Esophagus squamous epithelium (tissue), 5 donors: ENCODE measurements at regions of chr10 and their contacts with region 1.

Region 1: GRCh38 chr10:122699706-122700436 is at the start of gene C10orf120:
- DNase-seq: no peak
- H3K4me3 ChIP-seq: no peak within 1 kb of the TSS
- H3K27ac ChIP-seq: no peak within 1 kb of the TSS
- H3K4me1 ChIP-seq: no peaks in the 10 kb centered on the region
- H3K27me3 ChIP-seq: peaks cover 0 to 13% (median 0%) of the 10 kb centered on the region in 4 donors
- CTCF ChIP-seq: no peak
- POLR2A ChIP-seq: no peak
- total RNA-seq, gene C10orf120: not detected

Region 2: GRCh38 chr10:122279725-122280141 is 420.1 kb before region 1 on chr10:
- intact Hi-C with region 1: loop called (anchors 10 kb)
- DNase-seq: no peak
- H3K4me3 ChIP-seq: no peak overlapping the region
- H3K27ac ChIP-seq: no peak overlapping the region
- H3K4me1 ChIP-seq: no peaks in the 10 kb centered on the region
- H3K27me3 ChIP-seq: no peaks in the 10 kb centered on the region
- CTCF ChIP-seq: peak in 5 of 6 experiments; percentile 30 to 74 (median 56)
- POLR2A ChIP-seq: no peak

Region 3: DNA sequence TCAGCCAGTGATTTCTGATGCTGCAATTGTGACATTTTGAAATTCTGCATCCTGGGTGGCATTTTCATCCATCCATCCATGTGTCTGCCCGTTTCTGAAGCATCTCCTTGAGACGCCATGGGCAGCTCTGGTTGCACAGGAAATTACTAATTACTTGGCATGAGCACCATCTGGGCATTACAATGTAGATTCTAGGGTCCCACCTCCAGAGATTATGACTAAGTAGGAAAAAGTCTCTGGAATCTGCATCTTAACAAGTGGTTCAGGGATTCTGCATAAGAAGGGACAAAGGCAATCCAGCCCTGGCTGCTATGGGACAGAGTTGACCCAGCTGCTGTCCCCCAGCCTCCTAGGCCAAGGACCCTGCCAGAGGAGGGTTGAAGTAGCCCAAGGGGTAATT is 80.5 kb after region 1 on chr10:
- intact Hi-C with region 1: no loop called
- DNase-seq: no peak
- H3K4me3 ChIP-seq: no peak overlapping the region
- H3K27ac ChIP-seq: no peak overlapping the region
- H3K4me1 ChIP-seq: no peaks in the 10 kb centered on the region
- H3K27me3 ChIP-seq: peaks cover 0 to 25% (median 0%) of the 10 kb centered on the region in 4 donors
- CTCF ChIP-seq: no peak
- POLR2A ChIP-seq: no peak